PC-9 (cell line): ENCODE measurements at regions of chr15 and their contacts with region 1.

Region 1: GRCh38 chr15:100721770-100722550 is 119.6 kb downstream of the ASB7 start:
- DNase-seq: peak; percentile 87 to 100
- H3K4me3 ChIP-seq: peak overlapping the region; percentile 41; the same call in 1 of the 2 replicates
- H3K27ac ChIP-seq: peak overlapping the region; percentile 100
- H3K4me1 ChIP-seq: peaks cover 83% of the 10 kb centered on the region
- H3K27me3 ChIP-seq: no peaks in the 10 kb centered on the region
- CTCF ChIP-seq: no peak

Region 2: GRCh38 chr15:100707229-100707628 is 14.7 kb before region 1 on chr15:
- CTCF ChIA-PET with region 1: interaction called, 4 read pairs
- POLR2A ChIA-PET with region 1: interaction called, 27 read pairs
- intact Hi-C with region 1: loop called (anchors 1 kb)
- DNase-seq: peak; percentile 80 to 94
- H3K4me3 ChIP-seq: no peak overlapping the region
- H3K27ac ChIP-seq: peak overlapping the region; percentile 63
- H3K4me1 ChIP-seq: peaks cover 60% of the 10 kb centered on the region
- H3K27me3 ChIP-seq: no peaks in the 10 kb centered on the region
- CTCF ChIP-seq: no peak

Region 3: DNA sequence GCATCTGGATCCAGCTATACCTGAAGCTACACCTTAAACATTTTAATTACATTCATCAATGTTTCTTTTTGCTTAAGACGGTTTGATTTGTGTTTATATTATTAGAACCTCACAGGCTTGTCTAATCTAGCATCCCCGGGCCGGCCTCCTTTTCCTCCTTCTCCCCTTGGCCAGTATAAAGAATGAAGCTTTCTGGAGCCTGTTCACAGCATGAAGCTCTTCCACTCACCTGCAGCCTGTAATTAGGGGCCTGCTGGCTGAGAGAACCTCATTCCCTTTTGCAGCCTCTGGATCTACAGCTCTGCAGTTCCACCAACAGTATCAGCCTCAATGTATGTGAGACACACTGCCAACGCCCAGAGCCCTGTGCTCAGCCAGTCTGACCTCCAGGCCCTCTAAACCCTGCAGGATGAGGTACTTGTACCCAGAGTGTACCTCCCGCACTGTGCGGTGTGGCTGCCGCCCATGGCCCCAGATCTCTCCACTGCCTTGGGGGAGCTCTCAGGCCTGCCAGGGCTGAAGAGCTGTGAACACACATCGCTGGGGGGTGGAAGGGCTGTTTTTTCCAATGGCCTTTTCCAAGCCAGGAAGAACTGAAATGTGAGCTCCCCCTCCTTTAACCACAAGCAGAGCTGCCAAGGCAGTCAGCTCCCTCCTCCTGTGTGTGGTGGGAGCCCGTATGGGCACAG is 43.0 kb after region 1 on chr15:
- CTCF ChIA-PET with region 1: interaction called, 3 read pairs
- POLR2A ChIA-PET with region 1: interaction called, 10 read pairs
- intact Hi-C with region 1: no loop called
- DNase-seq: no peak
- H3K4me3 ChIP-seq: no peak overlapping the region
- H3K27ac ChIP-seq: no peak overlapping the region
- H3K4me1 ChIP-seq: peaks cover 15% of the 10 kb centered on the region
- H3K27me3 ChIP-seq: no peaks in the 10 kb centered on the region
- CTCF ChIP-seq: no peak

Region 4: DNA sequence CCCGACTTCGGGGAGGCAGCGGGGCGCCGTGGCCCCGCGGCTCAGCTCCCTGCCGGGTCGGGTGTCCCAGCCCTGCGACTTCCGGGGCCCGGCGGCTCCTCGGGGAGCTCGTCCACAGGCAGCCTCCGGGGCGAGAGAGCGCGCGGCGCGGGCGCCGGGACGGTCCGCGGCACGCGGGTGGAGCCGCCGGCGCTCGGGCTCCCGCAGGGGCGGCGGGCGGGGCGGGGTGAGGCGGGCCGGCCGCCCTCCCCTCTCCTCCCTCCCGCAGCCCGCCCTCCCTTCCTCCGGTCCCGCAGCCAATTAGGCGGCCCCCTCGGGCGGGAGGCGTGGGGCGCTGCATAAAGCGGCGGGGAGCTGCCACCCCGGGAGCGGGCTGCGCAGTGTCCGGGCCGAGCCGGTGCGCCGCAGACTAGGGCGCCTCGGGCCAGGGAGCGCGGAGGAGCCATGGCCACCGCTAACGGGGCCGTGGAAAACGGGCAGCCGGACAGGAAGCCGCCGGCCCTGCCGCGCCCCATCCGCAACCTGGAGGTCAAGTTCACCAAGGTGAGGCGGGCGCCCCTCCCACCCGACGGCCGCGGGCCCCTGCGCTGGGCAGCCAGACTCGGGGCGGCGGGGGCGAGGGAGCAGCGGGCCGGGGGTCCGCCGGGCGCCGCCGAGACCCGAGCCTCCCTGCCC is 157.6 kb after region 1 on chr15 and contains the start of gene ALDH1A3:
- CTCF ChIA-PET with region 1: no interaction called
- POLR2A ChIA-PET with region 1: interaction called, 8 read pairs
- intact Hi-C with region 1: loop called (anchors 2 kb)
- DNase-seq: peak; percentile 70 to 90
- H3K4me3 ChIP-seq: peak within 1 kb of the TSS; percentile 94
- H3K27ac ChIP-seq: peak within 1 kb of the TSS; percentile 75
- H3K4me1 ChIP-seq: peaks cover 29% of the 10 kb centered on the region
- H3K27me3 ChIP-seq: no peaks in the 10 kb centered on the region
- CTCF ChIP-seq: no peak
- total RNA-seq, gene ALDH1A3: 462 and 469 TPM in 2 replicates